ENCODE measurements at regions of chr11 and their contacts with region 1.

Region 1: GRCh38 chr11:44936525-44936924 is 14.2 kb downstream of the TP53I11 start:
- DNase-seq: peak; percentile 88
- H3K4me3 ChIP-seq: no peak overlapping the region
- H3K27ac ChIP-seq: no peak overlapping the region
- H3K4me1 ChIP-seq: peaks cover 0 to 5% (median 0%) of the 10 kb centered on the region in 4 donors
- H3K27me3 ChIP-seq: no peaks in the 10 kb centered on the region
- CTCF ChIP-seq: peak; percentile 96 to 98 (median 97)
- EP300 ChIP-seq: no peak
- POLR2A ChIP-seq: no peak

Region 2: DNA sequence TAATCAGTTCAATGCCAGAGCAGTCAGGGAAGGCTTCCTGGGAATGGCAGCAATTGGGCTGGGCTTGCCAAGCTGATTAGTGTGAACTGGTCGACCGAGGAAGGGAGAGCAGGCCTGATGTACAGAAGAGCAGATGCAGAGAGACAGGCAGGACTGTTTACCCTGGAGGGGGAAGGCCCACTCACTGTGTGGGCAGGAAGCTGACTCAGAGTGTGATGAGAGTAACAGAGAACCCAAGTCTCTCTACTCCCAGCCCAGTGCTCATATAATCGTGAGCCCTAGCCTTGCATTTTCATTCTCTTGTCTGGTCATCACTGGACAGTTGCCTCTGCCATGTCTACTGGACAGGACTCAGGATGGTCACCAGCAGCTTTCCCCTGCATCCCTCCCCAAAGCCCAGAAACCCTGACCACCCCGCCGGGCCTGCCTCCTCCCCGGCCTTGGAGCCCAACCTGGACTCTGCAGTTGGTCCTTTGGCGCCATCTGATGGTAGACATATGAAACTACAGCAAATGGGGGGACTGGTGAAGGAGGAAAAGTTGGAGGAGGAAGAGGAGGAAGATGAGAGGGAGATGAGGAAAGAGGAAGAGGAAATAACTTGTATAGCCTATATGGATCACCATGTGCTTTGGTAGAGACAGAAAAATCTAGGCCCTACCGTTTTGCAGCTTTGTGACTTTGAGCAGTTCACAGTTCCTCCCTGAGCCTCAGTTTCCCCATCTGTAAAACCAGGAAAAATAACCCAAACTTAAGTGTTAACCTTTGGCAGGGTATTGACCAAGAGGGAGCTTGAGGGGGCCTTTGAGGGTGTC is 166.5 kb after region 1 on chr11:
- in situ Hi-C with region 1: loop called in 3 of 4 experiments (anchors 5 kb)
- intact Hi-C with region 1: loop called (anchors 2 kb)
- DNase-seq: peak; percentile 51
- H3K4me3 ChIP-seq: peak overlapping the region in 1 of 4 donors; percentile 5
- H3K27ac ChIP-seq: no peak overlapping the region
- H3K4me1 ChIP-seq: peaks cover 0 to 12% (median 0%) of the 10 kb centered on the region in 4 donors
- H3K27me3 ChIP-seq: peaks cover 13% of the 10 kb centered on the region
- CTCF ChIP-seq: peak; percentile 93 to 98 (median 96)
- EP300 ChIP-seq: no peak
- POLR2A ChIP-seq: no peak

Region 3: DNA sequence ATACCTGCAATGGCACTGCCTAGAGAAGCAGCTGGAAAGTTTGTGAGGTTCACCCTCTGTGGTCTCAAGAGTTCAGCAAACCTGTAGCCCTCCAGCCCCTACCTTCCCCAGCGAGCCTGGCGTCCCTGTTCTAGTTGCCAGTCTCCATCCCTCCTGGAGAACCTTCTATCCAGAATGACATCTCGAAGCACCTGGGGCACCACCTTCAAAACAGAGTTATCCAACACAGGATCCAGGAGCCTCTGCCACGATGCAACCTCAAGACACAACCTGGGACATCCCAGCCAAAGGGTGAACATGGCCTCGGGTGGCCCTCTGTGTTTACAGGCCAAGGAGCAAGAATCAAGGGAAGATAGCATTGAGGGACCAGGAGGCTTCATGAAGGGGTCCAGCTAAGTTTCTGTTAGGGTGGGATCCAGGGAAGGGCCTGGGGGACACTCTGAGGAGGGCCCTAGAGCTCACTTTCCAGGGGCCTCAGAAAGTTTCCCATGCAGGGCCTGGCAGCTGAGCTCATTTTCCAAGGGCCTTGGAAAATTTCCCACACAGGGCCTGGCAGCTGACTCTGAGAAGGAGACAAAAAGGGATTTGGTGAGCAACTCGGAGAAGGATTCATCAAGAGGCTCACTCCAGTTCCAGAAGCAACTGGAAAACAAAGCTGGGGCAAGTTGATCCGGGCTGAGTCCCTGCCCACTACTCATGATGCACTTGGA is 386.5 kb after region 1 on chr11:
- in situ Hi-C with region 1: loop called in 3 of 4 experiments (anchors 10 to 25 kb)
- intact Hi-C with region 1: no loop called
- DNase-seq: no peak
- H3K4me3 ChIP-seq: no peak overlapping the region
- H3K27ac ChIP-seq: no peak overlapping the region
- H3K4me1 ChIP-seq: no peaks in the 10 kb centered on the region
- H3K27me3 ChIP-seq: no peaks in the 10 kb centered on the region
- CTCF ChIP-seq: no peak
- EP300 ChIP-seq: no peak
- POLR2A ChIP-seq: no peak

Measured in transverse colon (tissue), 4 donors.